Esophagus muscularis mucosa (tissue), 4 donors: ENCODE measurements at regions of chr12 and their contacts with region 1.

Region 1: GRCh38 chr12:14239350-14239934 is 126.0 kb upstream of the ATF7IP start:
- DNase-seq: no peak
- H3K4me3 ChIP-seq: peak overlapping the region in 1 of 4 donors; percentile 11
- H3K27ac ChIP-seq: no peak overlapping the region
- H3K4me1 ChIP-seq: peaks cover 0 to 3% (median 0%) of the 10 kb centered on the region in 4 donors
- H3K27me3 ChIP-seq: no peaks in the 10 kb centered on the region
- CTCF ChIP-seq: no peak
- EP300 ChIP-seq: no peak
- POLR2A ChIP-seq: no peak

Region 2: GRCh38 chr12:14629832-14630710 is 390.6 kb after region 1 on chr12:
- intact Hi-C with region 1: loop called (anchors 10 kb)
- DNase-seq: no peak
- H3K4me3 ChIP-seq: no peak overlapping the region
- H3K27ac ChIP-seq: no peak overlapping the region
- H3K4me1 ChIP-seq: no peaks in the 10 kb centered on the region
- H3K27me3 ChIP-seq: no peaks in the 10 kb centered on the region
- CTCF ChIP-seq: peak; percentile 93 to 98 (median 95)
- EP300 ChIP-seq: no peak
- POLR2A ChIP-seq: no peak

Region 3: DNA sequence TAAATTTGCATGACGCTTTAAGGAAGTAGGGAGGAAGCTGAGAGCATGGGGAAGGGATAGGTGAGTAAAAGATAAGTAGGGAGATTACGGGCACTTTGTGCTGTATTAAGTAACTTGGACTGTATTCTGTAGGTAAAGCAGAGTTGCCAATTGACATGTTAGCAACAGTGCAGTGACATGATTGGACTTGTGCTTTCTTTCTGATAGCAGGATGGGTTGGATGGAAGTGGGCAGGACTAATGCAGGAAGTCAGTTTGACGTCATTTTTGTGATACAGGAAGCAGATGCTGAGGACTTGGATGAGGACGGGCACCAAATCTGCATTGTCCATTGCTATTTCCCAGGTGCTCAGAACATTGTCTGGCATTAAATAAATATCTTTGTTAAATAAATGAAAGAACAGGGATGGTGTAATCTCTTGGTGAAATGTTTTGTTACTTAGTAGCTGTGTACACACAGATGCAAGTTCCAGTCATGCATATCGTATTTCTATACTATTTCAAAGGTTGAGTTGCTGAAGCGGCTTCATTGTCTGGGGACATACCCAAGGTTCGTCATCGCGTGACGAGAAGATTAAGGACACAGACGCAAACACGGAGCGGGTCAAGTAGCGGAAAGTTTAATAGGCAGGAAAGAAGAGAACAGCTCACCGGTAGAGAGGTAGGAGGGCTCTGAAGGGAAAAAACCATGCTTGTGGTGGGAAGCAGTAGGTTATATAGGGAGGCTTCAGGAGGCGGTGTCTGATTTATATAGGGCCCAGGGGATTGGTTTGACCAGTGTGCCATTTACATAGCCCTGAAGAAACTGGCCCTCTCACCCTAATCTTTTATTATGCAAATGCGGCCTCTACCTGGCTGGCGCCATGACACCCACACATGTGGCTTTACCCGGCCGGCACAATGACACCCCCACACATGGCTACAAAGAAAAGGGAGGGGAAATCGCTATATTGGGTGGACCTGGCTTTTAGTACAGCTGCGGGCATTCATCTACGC is 426.2 kb after region 1 on chr12:
- intact Hi-C with region 1: loop called (anchors 5 kb)
- DNase-seq: no peak
- H3K4me3 ChIP-seq: no peak overlapping the region
- H3K27ac ChIP-seq: no peak overlapping the region
- H3K4me1 ChIP-seq: no peaks in the 10 kb centered on the region
- H3K27me3 ChIP-seq: no peaks in the 10 kb centered on the region
- CTCF ChIP-seq: no peak
- EP300 ChIP-seq: no peak
- POLR2A ChIP-seq: no peak